ENCODE measurements at regions of chr17 and their contacts with region 1.

Region 1: DNA sequence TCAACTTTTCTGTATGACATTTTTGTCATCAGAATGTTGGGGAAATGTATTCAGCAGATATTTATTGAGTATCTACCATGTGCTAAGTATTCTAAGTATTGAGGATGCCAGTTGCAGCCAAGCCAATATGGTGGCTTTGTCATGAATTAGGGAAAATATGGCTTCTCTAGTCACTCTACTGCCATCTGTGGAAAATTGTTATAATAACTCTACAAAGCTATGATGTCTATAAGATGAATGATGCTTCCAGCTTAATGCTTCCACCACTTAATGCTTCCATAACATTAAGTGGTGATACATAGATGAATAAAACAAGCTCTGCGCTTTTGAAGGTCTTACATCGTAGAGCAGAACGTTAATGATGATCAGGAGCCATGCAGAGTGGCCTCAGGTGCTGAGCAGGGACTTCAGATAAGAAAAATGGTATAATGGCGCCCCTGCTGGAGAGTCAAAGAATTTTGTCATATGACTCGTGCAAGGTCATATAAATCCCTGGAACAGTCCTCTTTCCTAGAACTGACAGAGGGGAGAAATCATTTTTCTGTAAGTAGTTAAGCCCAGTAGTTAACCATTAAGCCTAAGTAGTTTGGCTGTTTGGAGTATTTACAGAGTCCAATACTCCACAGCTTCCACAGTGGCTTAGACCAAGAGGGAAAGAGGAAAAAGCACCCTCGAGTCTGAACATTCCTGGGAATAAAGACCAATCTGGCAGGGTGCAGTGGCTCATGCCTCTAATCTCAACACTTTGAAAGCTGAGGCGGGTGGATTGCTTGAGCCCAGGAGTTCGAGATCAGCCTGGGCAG is 2.7 kb upstream of the TMIGD1 start:
- DNase-seq: no peak
- ATAC-seq: peak; percentile 58
- H3K4me3 ChIP-seq: no peak overlapping the region
- H3K27ac ChIP-seq: no peak overlapping the region
- H3K4me1 ChIP-seq: peaks cover 12% of the 10 kb centered on the region
- H3K27me3 ChIP-seq: no peaks in the 10 kb centered on the region
- CTCF ChIP-seq: peak; percentile 57 to 86 (median 63); a peak in 5 of 6 replicates
- EP300 ChIP-seq: no peak
- POLR2A ChIP-seq: no peak
- RAD21 ChIP-seq: peak; percentile 78

Region 2: GRCh38 chr17:30093463-30094147 is 243.0 kb before region 1 on chr17:
- CTCF ChIA-PET with region 1: interaction called, 104 read pairs
- POLR2A ChIA-PET with region 1: no interaction called
- RAD21 ChIA-PET with region 1: interaction called, 9 read pairs
- SMC1A ChIA-PET with region 1: interaction called, 7 read pairs
- in situ Hi-C with region 1: no loop called
- intact Hi-C with region 1: no loop called
- DNase-seq: peak; percentile 32
- ATAC-seq: peak; percentile 88
- H3K4me3 ChIP-seq: no peak overlapping the region
- H3K27ac ChIP-seq: no peak overlapping the region
- H3K4me1 ChIP-seq: peaks cover 3% of the 10 kb centered on the region; the same call in 1 of the 2 replicates
- H3K27me3 ChIP-seq: no peaks in the 10 kb centered on the region; a peak in 1 of 4 replicates
- CTCF ChIP-seq: peak; percentile 63 to 82 (median 70); a peak in 5 of 6 replicates
- EP300 ChIP-seq: no peak
- POLR2A ChIP-seq: no peak
- RAD21 ChIP-seq: peak; percentile 88

Region 3: DNA sequence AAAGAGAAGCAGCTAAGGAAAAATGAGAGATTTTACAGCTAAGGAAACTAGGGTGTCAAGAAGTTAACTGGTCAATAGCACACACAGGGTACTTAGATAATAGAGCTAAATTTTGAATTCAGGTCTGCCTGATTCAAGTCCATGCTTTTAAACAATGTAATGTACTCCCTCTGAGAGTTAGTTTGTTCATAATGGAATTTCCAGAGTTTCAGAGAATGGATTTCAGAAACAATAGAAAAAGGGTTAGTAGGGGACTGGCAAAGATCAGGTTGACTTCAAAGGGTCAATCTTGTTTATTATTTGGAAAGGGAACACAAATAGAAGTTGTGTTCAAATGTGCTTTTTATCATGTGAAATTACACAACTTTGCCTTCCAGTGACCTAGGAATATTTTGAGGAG is 202.0 kb before region 1 on chr17:
- CTCF ChIA-PET with region 1: interaction called, 10 read pairs
- POLR2A ChIA-PET with region 1: no interaction called
- RAD21 ChIA-PET with region 1: interaction called, 4 read pairs
- SMC1A ChIA-PET with region 1: interaction called, 6 read pairs
- in situ Hi-C with region 1: no loop called
- intact Hi-C with region 1: loop called (anchors 5 kb)
- DNase-seq: no peak
- ATAC-seq: no peak
- H3K4me3 ChIP-seq: no peak overlapping the region
- H3K27ac ChIP-seq: no peak overlapping the region
- H3K4me1 ChIP-seq: no peaks in the 10 kb centered on the region
- H3K27me3 ChIP-seq: no peaks in the 10 kb centered on the region
- CTCF ChIP-seq: no peak
- EP300 ChIP-seq: no peak
- POLR2A ChIP-seq: no peak
- RAD21 ChIP-seq: no peak

Region 4: DNA sequence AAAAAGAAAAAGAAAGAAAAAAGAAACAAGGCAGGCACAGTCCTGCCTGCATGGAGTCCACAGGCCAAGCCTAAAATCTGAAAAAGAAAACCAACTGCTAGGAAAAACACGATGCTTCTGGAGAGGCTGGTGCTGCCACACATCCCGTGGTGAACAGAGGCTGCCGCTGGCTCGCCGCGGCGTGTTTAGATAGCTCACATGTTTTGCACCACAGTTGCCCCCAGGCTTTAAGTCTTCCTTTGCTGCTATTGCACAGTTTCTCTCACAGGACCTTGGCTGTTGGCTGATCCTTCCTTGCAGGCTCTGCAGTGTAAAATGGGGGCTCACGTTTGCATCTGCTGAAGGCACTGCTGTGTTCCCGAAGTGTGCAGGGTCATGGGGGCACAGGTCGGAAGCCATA is 109.7 kb before region 1 on chr17:
- CTCF ChIA-PET with region 1: interaction called, 12 read pairs
- POLR2A ChIA-PET with region 1: no interaction called
- RAD21 ChIA-PET with region 1: no interaction called
- SMC1A ChIA-PET with region 1: interaction called, 3 read pairs
- in situ Hi-C with region 1: no loop called
- intact Hi-C with region 1: loop called (anchors 10 kb)
- DNase-seq: no peak
- ATAC-seq: no peak
- H3K4me3 ChIP-seq: no peak overlapping the region
- H3K27ac ChIP-seq: no peak overlapping the region
- H3K4me1 ChIP-seq: no peaks in the 10 kb centered on the region
- H3K27me3 ChIP-seq: no peaks in the 10 kb centered on the region
- CTCF ChIP-seq: no peak
- EP300 ChIP-seq: no peak
- POLR2A ChIP-seq: no peak
- RAD21 ChIP-seq: no peak

Region 5: GRCh38 chr17:30291543-30292285 is 44.9 kb before region 1 on chr17 and contains the start of gene BLMH:
- CTCF ChIA-PET with region 1: interaction called, 33 read pairs
- POLR2A ChIA-PET with region 1: interaction called, 6 read pairs
- RAD21 ChIA-PET with region 1: interaction called, 25 read pairs
- SMC1A ChIA-PET with region 1: interaction called, 11 read pairs
- in situ Hi-C with region 1: no loop called
- intact Hi-C with region 1: loop called (anchors 2 kb)
- DNase-seq: no peak
- ATAC-seq: peak; percentile 94
- H3K4me3 ChIP-seq: peak within 1 kb of the TSS; percentile 92
- H3K27ac ChIP-seq: peak within 1 kb of the TSS; percentile 59
- H3K4me1 ChIP-seq: no peaks in the 10 kb centered on the region
- H3K27me3 ChIP-seq: no peaks in the 10 kb centered on the region
- CTCF ChIP-seq: no peak
- EP300 ChIP-seq: no peak
- POLR2A ChIP-seq: peak; percentile 84
- RAD21 ChIP-seq: no peak
- polyA plus RNA-seq, gene BLMH: 16.1 to 34.2 TPM

Region 6: GRCh38 chr17:30323895-30324319 is 12.7 kb before region 1 on chr17:
- CTCF ChIA-PET with region 1: interaction called, 49 read pairs
- POLR2A ChIA-PET with region 1: interaction called, 4 read pairs
- RAD21 ChIA-PET with region 1: interaction called, 10 read pairs
- SMC1A ChIA-PET with region 1: interaction called, 17 read pairs
- in situ Hi-C with region 1: no loop called
- intact Hi-C with region 1: no loop called
- DNase-seq: no peak
- ATAC-seq: peak; percentile 86
- H3K4me3 ChIP-seq: no peak overlapping the region
- H3K27ac ChIP-seq: no peak overlapping the region
- H3K4me1 ChIP-seq: peaks cover 17% of the 10 kb centered on the region
- H3K27me3 ChIP-seq: no peaks in the 10 kb centered on the region; a peak in 1 of 4 replicates
- CTCF ChIP-seq: no peak
- EP300 ChIP-seq: no peak
- POLR2A ChIP-seq: no peak
- RAD21 ChIP-seq: no peak

Measured in GM12878 (cell line).